ENCODE measurements at regions of chr7 and their contacts with region 1.

Region 1: GRCh38 chr7:99997545-99998137 is 17.8 kb upstream of the ZKSCAN1 start:
- DNase-seq: no peak
- H3K4me3 ChIP-seq: peak overlapping the region; percentile 43
- CTCF ChIP-seq: no peak

Region 2: GRCh38 chr7:99975782-99976521 is 21.7 kb before region 1 on chr7 and contains the start of gene AZGP1:
- CTCF ChIA-PET with region 1: interaction called, 132 read pairs
- POLR2A ChIA-PET with region 1: no interaction called
- DNase-seq: no peak
- H3K4me3 ChIP-seq: no peak within 1 kb of the TSS
- CTCF ChIP-seq: no peak

Region 3: GRCh38 chr7:100015232-100016209 is 17.9 kb after region 1 on chr7 and contains the start of gene ZKSCAN1:
- CTCF ChIA-PET with region 1: interaction called, 122 read pairs
- POLR2A ChIA-PET with region 1: interaction called, 3 read pairs
- DNase-seq: peak; percentile 52
- H3K4me3 ChIP-seq: peak within 1 kb of the TSS; percentile 89
- CTCF ChIP-seq: no peak

Region 4: GRCh38 chr7:100049441-100050311 is 52.0 kb after region 1 on chr7 and contains the start of gene ZSCAN21:
- CTCF ChIA-PET with region 1: interaction called, 363 read pairs
- POLR2A ChIA-PET with region 1: no interaction called
- DNase-seq: no peak
- H3K4me3 ChIP-seq: peak within 1 kb of the TSS; percentile 96
- CTCF ChIP-seq: peak; percentile 25

Region 5: GRCh38 chr7:100081535-100082102 is 84.0 kb after region 1 on chr7 and contains the start of gene ZNF3:
- CTCF ChIA-PET with region 1: interaction called, 105 read pairs
- POLR2A ChIA-PET with region 1: no interaction called
- DNase-seq: peak; percentile 95
- H3K4me3 ChIP-seq: peak within 1 kb of the TSS; percentile 97
- CTCF ChIP-seq: peak; percentile 98

Measured in AG04449 (cell line).